CD4-positive, alpha-beta memory T cell (primary cell): ENCODE measurements at regions of chr19 and their contacts with region 1.

Region 1: GRCh38 chr19:20923077-20923871 is at the start of gene ZNF85:
- DNase-seq: peak; percentile 90 to 94 (median 91)
- H3K4me3 ChIP-seq: peak within 1 kb of the TSS; percentile 63 to 81
- H3K4me3 Mint-ChIP-seq: peak within 1 kb of the TSS; percentile 94 to 98 (median 96)
- H3K27ac ChIP-seq: peak within 1 kb of the TSS; percentile 62
- H3K27ac Mint-ChIP-seq: peak within 1 kb of the TSS; percentile 86 to 97 (median 96)
- H3K4me1 ChIP-seq: peaks cover 4% of the 10 kb centered on the region
- H3K4me1 Mint-ChIP-seq: peaks cover 5 to 14% (median 10%) of the 10 kb centered on the region in 4 donors
- H3K27me3 ChIP-seq: no peaks in the 10 kb centered on the region
- H3K27me3 Mint-ChIP-seq: no peaks in the 10 kb centered on the region
- total RNA-seq, gene ZNF85: 6.5 to 7.6 TPM

Region 2: GRCh38 chr19:20039203-20039723 is 884.0 kb before region 1 on chr19 and contains the start of gene ZNF682:
- CTCF ChIA-PET with region 1: no interaction called
- POLR2A ChIA-PET with region 1: no interaction called
- intact Hi-C with region 1: loop called (anchors 10 kb)
- DNase-seq: peak; percentile 93 to 97 (median 94)
- H3K4me3 ChIP-seq: peak within 1 kb of the TSS; percentile 79 to 96
- H3K4me3 Mint-ChIP-seq: peak within 1 kb of the TSS; percentile 95 to 98 (median 97)
- H3K27ac ChIP-seq: peak within 1 kb of the TSS; percentile 66
- H3K27ac Mint-ChIP-seq: peak within 1 kb of the TSS; percentile 95 to 98 (median 97)
- H3K4me1 ChIP-seq: peaks cover 13% of the 10 kb centered on the region
- H3K4me1 Mint-ChIP-seq: peaks cover 13 to 27% (median 18%) of the 10 kb centered on the region in 4 donors
- H3K27me3 ChIP-seq: no peaks in the 10 kb centered on the region
- H3K27me3 Mint-ChIP-seq: peaks cover 0 to 3% of the 10 kb centered on the region in 2 donors
- total RNA-seq, gene ZNF682: 7.3 TPM

Region 3: GRCh38 chr19:20565321-20566018 is 357.8 kb before region 1 on chr19 and contains the start of gene ZNF737:
- CTCF ChIA-PET with region 1: no interaction called
- POLR2A ChIA-PET with region 1: interaction called, 11 read pairs
- intact Hi-C with region 1: loop called (anchors 1 kb)
- DNase-seq: peak; percentile 91 to 95 (median 93)
- H3K4me3 ChIP-seq: peak within 1 kb of the TSS; percentile 57 to 95
- H3K4me3 Mint-ChIP-seq: peak within 1 kb of the TSS; percentile 99 to 100 (median 99)
- H3K27ac ChIP-seq: peak within 1 kb of the TSS; percentile 73
- H3K27ac Mint-ChIP-seq: peak within 1 kb of the TSS; percentile 97 to 99 (median 98)
- H3K4me1 ChIP-seq: no peaks in the 10 kb centered on the region
- H3K4me1 Mint-ChIP-seq: peaks cover 12 to 43% (median 29%) of the 10 kb centered on the region in 4 donors
- H3K27me3 ChIP-seq: no peaks in the 10 kb centered on the region
- H3K27me3 Mint-ChIP-seq: no peaks in the 10 kb centered on the region
- total RNA-seq, gene ZNF737: 41.3 to 44.7 TPM

Region 4: GRCh38 chr19:20616071-20616470 is 307.2 kb before region 1 on chr19:
- CTCF ChIA-PET with region 1: no interaction called
- POLR2A ChIA-PET with region 1: no interaction called
- intact Hi-C with region 1: no loop called
- DNase-seq: no peak
- H3K4me3 ChIP-seq: no peak overlapping the region
- H3K4me3 Mint-ChIP-seq: no peak overlapping the region
- H3K27ac ChIP-seq: no peak overlapping the region
- H3K27ac Mint-ChIP-seq: no peak overlapping the region
- H3K4me1 ChIP-seq: no peaks in the 10 kb centered on the region
- H3K4me1 Mint-ChIP-seq: peaks cover 0 to 11% (median 7%) of the 10 kb centered on the region in 4 donors
- H3K27me3 ChIP-seq: no peaks in the 10 kb centered on the region
- H3K27me3 Mint-ChIP-seq: no peaks in the 10 kb centered on the region

Region 5: DNA sequence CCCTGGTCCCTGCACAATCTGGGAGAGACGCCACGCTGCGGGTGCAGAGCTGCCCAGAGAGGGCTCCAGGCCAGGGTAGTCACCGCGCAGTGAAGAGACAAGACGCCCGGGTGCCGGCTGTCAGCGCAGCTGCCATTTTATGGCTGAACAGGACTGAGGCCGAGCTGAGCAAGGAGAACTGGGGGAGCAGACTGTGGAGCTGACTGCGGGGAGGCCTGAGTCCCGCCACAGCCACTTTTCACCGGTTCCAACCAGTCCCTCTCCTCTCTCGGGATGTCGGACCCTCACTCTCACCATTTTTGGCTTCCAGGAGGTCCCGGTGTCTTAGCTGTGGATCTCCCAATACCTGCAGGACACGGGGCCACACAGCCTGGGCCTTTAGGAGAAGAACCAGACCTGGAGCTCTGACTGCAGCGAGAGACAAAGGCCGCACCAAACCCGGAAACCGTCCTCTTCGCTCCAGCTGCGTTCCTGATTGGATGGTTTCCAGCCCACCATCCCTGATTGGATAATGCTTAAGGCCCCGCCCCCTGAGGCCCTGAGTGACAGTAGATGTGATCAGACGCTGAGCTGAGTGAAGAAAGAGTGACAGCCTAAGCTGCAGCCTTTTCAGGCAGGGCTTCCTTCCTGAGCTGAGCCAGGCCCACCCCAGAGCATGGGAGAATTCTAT is 262.0 kb before region 1 on chr19 and contains the start of gene ZNF626:
- CTCF ChIA-PET with region 1: no interaction called
- POLR2A ChIA-PET with region 1: interaction called, 13 read pairs
- intact Hi-C with region 1: loop called (anchors 5 kb)
- DNase-seq: peak; percentile 88 to 95 (median 92)
- H3K4me3 ChIP-seq: peak within 1 kb of the TSS; percentile 36 to 60
- H3K4me3 Mint-ChIP-seq: peak within 1 kb of the TSS; percentile 90 to 98 (median 97)
- H3K27ac ChIP-seq: peak within 1 kb of the TSS; percentile 81
- H3K27ac Mint-ChIP-seq: peak within 1 kb of the TSS; percentile 91 to 98 (median 97)
- H3K4me1 ChIP-seq: peaks cover 12% of the 10 kb centered on the region
- H3K4me1 Mint-ChIP-seq: peaks cover 20 to 73% (median 46%) of the 10 kb centered on the region in 4 donors
- H3K27me3 ChIP-seq: no peaks in the 10 kb centered on the region
- H3K27me3 Mint-ChIP-seq: no peaks in the 10 kb centered on the region
- total RNA-seq, gene ZNF626: 18.6 to 19.8 TPM

Region 6: GRCh38 chr19:20912973-20913372 is 10.3 kb before region 1 on chr19:
- CTCF ChIA-PET with region 1: no interaction called
- POLR2A ChIA-PET with region 1: no interaction called
- intact Hi-C with region 1: no loop called
- DNase-seq: no peak
- H3K4me3 ChIP-seq: no peak overlapping the region
- H3K4me3 Mint-ChIP-seq: no peak overlapping the region
- H3K27ac ChIP-seq: no peak overlapping the region
- H3K27ac Mint-ChIP-seq: no peak overlapping the region
- H3K4me1 ChIP-seq: no peaks in the 10 kb centered on the region
- H3K4me1 Mint-ChIP-seq: peaks cover 0 to 5% (median under 1%) of the 10 kb centered on the region in 4 donors
- H3K27me3 ChIP-seq: no peaks in the 10 kb centered on the region
- H3K27me3 Mint-ChIP-seq: peaks cover 9 to 43% of the 10 kb centered on the region in 2 donors

Region 7: DNA sequence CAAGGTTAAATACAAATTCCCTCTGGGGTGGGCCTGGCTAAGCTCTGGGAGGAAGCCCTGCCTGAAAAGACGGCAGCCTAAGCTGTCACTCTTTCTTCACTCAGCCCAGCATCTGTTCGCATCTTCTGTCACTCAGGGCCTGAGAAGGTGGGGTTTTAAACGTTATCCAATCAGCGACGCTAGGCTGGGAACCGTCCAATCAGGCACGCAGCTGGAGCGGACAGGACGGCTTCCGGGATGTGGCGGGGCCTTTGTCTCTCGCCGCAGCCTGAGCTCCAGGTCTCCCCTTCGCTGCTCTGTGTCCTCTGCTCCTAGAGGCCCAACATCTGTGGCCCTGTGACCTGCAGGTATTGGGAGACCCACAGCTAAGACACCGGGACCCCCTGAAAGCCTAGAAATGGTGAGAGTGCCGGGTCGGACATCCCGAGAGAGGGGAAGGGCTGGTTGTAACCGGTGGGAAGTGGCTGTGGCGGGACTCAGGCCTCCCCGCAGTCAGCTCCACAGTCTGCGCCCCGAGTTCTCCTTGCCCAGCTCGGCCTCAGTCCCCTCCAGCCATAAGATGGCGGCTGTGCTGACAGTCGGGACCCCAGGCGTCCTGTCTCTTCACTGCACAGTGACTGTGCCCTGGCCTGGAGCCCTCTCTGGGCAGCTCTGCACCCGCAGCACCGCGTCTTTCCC is 218.7 kb after region 1 on chr19 and contains the start of gene ZNF431:
- CTCF ChIA-PET with region 1: no interaction called
- POLR2A ChIA-PET with region 1: interaction called, 13 read pairs
- intact Hi-C with region 1: loop called (anchors 10 kb)
- DNase-seq: peak; percentile 89 to 93 (median 90)
- H3K4me3 ChIP-seq: peak within 1 kb of the TSS; percentile 71 to 94
- H3K4me3 Mint-ChIP-seq: peak within 1 kb of the TSS; percentile 96 to 99 (median 98)
- H3K27ac ChIP-seq: peak within 1 kb of the TSS; percentile 74
- H3K27ac Mint-ChIP-seq: peak within 1 kb of the TSS; percentile 91 to 99 (median 97)
- H3K4me1 ChIP-seq: peaks cover 21% of the 10 kb centered on the region
- H3K4me1 Mint-ChIP-seq: peaks cover 24 to 59% (median 40%) of the 10 kb centered on the region in 4 donors
- H3K27me3 ChIP-seq: no peaks in the 10 kb centered on the region
- H3K27me3 Mint-ChIP-seq: no peaks in the 10 kb centered on the region
- total RNA-seq, gene ZNF431: 32.1 to 34.4 TPM